Posterior vena cava (tissue), 2 donors: ENCODE measurements at regions of chr7 and their contacts with region 1.

Region 1: DNA sequence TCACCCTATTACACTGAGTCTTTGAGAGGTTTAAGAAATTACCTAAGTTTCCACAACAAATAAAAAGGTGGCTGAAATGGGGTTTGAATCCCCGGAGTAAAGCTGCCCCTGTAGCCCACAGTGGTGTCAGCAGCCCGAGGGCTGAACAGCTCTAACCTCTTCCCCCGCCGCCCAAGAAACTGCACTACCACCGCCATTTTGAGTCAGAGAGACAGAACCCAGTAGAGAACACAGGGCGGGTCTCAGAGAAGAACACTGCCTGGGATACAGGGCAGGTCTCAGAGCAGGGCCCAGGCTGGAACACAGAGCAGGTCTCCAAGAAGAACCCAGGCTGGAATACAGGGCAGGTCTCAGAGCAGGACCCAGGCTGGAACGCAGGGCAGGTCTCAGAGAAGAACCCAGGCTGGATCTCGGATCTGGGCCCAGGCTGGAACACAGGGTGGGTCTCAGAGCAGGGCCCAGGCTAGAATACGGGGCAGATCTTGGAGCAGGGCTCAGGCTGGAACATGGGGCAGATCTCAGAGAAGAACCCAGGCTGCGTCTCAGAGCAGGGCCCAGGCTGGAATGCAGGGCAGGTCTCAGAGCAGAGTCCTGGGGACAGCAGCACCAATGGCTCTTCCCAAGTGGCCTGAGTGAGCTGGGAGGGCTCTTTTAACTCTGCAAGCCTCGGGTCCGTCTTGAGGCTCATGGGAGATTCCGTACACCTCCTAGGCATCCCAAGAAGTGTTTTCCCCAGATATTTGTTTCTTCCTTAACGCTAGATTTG is 85.9 kb upstream of the LANCL2 start:
- DNase-seq: no peak

Region 2: GRCh38 chr7:55409482-55410225 is 130.4 kb after region 1 on chr7:
- intact Hi-C with region 1: loop called (anchors 2 to 5 kb)
- DNase-seq: no peak

Region 3: GRCh38 chr7:55415173-55415778 is 136.0 kb after region 1 on chr7:
- intact Hi-C with region 1: loop called (anchors 2 to 5 kb)
- DNase-seq: peak; percentile 92

Region 4: DNA sequence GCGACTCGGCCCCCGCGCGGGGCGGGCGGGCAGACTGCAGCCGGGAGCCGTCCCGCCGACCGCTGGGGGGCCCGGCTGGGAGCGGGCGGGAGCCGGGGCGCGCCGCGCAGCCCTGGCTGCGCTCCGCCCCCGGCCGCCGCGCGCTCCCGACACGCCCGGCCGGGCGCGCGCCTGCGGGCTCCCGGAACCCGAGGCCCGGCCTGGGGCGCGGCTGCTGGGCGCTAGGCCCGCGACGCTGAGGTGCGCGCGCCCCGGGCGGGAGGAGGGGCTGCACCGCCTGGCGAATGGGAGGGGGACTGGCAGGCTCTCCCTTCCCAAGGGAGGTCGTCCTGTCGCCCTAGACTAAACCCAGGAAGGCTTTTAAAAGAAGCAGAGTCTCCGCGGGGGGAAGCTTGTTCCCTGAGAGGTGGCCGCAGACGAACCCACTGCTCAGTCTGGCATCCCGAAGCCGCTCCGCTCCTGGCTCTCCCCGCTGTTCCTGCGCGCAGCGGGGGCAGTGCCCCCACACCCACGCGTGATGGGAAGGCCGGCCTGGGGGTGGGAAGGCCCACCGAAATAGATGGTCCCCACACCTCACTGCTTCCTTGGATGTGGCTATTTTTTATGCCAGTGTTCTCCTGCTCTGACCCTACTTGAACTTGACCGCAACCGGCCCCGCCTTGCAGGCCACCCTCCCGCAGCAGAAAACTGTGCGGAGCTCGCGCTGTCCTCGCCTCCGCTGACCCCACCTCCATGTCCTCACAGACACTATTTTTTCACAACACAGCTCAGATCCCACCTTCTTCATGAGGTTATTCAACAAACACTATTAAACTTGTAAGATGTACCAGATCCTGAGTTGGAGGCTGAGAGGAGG is 293.3 kb after region 1 on chr7 and contains the start of gene VOPP1:
- intact Hi-C with region 1: no loop called
- DNase-seq: no peak
- total RNA-seq, gene VOPP1: 47.4 to 56.7 TPM